Caco-2 (cell line): ENCODE measurements at regions of chr2 and their contacts with region 1.

Region 1: GRCh38 chr2:75064691-75065396 is 106.4 kb downstream of the POLE4 start:
- DNase-seq: peak; percentile 59 to 79
- H3K4me3 ChIP-seq: no peak overlapping the region
- H3K4me3 Mint-ChIP-seq: no peak overlapping the region
- H3K27ac Mint-ChIP-seq: no peak overlapping the region
- H3K4me1 ChIP-seq: no peaks in the 10 kb centered on the region
- H3K4me1 Mint-ChIP-seq: peaks cover 5% of the 10 kb centered on the region
- H3K27me3 ChIP-seq: no peaks in the 10 kb centered on the region
- H3K27me3 Mint-ChIP-seq: no peaks in the 10 kb centered on the region
- CTCF ChIP-seq: peak; percentile 91 to 92

Region 2: DNA sequence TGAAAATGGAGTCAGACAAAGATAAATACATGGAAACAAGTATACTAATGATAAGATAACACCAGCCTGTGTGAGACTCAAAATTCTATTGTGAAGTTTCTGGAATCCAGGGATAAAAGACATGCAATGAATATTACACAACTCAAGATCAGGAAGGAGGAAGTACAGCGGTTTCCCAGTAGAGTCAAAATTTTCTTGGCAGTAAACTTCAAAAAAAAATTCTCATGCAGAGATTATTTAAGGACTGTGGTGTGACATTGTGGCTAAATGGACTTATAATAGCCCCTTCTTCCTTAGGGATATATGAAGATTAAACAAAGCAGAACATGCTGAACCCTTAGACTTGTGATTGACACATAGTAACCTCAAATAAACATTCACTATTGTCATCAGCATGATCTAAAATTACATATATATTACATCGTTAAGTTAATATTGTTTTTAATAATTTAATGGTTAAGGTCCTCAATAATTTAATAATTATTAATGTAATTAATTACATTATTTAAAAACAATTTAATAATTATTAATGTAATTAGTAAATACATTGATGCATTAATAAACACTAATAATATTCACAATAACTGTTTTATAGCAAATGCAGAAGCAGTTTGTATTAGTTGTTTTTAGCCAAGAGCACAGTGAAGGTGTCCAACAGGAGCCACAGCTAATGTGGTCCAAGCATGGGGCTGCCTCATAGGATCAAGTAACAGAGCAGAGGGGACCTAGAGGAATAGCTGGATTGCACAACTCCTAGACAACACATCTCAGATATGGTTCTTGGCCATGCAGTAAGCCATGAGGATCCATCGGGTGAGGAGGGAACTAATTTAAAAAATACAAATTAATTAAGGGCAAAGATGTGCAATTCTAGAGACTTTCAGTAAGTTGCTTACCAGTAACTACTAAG is 29.1 kb before region 1 on chr2:
- CTCF ChIA-PET with region 1: no interaction called
- POLR2A ChIA-PET with region 1: no interaction called
- intact Hi-C with region 1: no loop called
- DNase-seq: peak in 1 of 2 experiments; percentile 11
- H3K4me3 ChIP-seq: no peak overlapping the region
- H3K4me3 Mint-ChIP-seq: no peak overlapping the region
- H3K27ac Mint-ChIP-seq: no peak overlapping the region
- H3K4me1 ChIP-seq: peaks cover 9% of the 10 kb centered on the region
- H3K4me1 Mint-ChIP-seq: no peaks in the 10 kb centered on the region
- H3K27me3 ChIP-seq: no peaks in the 10 kb centered on the region
- H3K27me3 Mint-ChIP-seq: no peaks in the 10 kb centered on the region
- CTCF ChIP-seq: no peak

Region 3: DNA sequence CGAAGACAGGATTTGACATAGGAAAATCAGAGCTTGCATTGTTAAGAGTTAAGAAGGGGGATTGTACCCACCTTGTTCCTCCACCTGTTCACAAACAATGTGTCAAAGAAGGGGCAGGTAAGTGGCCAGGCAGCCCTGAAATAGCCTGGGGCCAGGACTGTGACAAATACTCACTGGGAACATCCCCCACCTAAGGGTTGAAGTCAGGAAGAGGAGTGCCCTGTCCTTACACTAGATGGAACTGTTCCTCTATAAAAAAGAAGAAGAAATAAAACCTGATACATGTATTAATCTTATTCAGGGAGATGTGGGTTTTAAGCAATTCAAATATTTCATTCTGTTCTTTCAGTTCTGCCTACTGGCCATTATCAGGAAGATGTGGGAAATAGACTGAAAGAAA is 92.6 kb after region 1 on chr2:
- CTCF ChIA-PET with region 1: interaction called, 5 read pairs
- POLR2A ChIA-PET with region 1: no interaction called
- intact Hi-C with region 1: loop called (anchors 2 kb)
- DNase-seq: no peak
- H3K4me3 ChIP-seq: no peak overlapping the region
- H3K4me3 Mint-ChIP-seq: no peak overlapping the region
- H3K27ac Mint-ChIP-seq: no peak overlapping the region
- H3K4me1 ChIP-seq: peaks cover 20% of the 10 kb centered on the region
- H3K4me1 Mint-ChIP-seq: peaks cover 8% of the 10 kb centered on the region
- H3K27me3 ChIP-seq: no peaks in the 10 kb centered on the region
- H3K27me3 Mint-ChIP-seq: peaks cover 6% of the 10 kb centered on the region
- CTCF ChIP-seq: peak in 1 of 2 experiments; percentile 5

Region 4: GRCh38 chr2:75199428-75200011 is 134.7 kb after region 1 on chr2 and contains the start of gene TACR1:
- CTCF ChIA-PET with region 1: no interaction called
- POLR2A ChIA-PET with region 1: no interaction called
- intact Hi-C with region 1: loop called (anchors 1 kb)
- DNase-seq: peak; percentile 76 to 78
- H3K4me3 ChIP-seq: peak within 1 kb of the TSS; percentile 21
- H3K4me3 Mint-ChIP-seq: peak within 1 kb of the TSS; percentile 75
- H3K27ac Mint-ChIP-seq: no peak within 1 kb of the TSS
- H3K4me1 ChIP-seq: peaks cover 15% of the 10 kb centered on the region; the same call in 1 of the 2 replicates
- H3K4me1 Mint-ChIP-seq: peaks cover 6% of the 10 kb centered on the region
- H3K27me3 ChIP-seq: peaks cover 9% of the 10 kb centered on the region
- H3K27me3 Mint-ChIP-seq: peaks cover 18% of the 10 kb centered on the region
- CTCF ChIP-seq: peak; percentile 49 to 69
- total RNA-seq, gene TACR1: 0.07 TPM in 2 replicates

Region 5: DNA sequence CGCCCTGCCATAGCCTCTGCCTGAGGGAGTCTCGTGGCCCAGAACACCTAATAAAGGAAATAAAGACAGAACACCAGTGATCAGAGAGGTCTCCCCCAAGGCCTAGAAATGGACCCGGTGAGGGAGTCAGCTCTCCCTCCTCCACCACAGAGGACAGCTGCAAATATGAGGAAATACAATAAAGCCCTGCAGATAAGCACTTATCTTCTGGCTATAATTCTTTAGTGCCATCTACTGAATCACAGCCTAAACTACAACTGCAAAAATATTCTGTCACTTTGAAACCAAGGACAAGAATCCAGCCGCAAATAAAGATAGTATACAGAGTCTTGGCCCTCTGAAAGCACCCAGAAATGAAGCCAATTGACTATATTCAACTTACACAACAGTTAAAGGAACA is 176.9 kb after region 1 on chr2:
- CTCF ChIA-PET with region 1: interaction called, 3 read pairs
- POLR2A ChIA-PET with region 1: no interaction called
- intact Hi-C with region 1: loop called (anchors 2 kb)
- DNase-seq: no peak
- H3K4me3 ChIP-seq: no peak overlapping the region
- H3K4me3 Mint-ChIP-seq: no peak overlapping the region
- H3K27ac Mint-ChIP-seq: no peak overlapping the region
- H3K4me1 ChIP-seq: no peaks in the 10 kb centered on the region
- H3K4me1 Mint-ChIP-seq: no peaks in the 10 kb centered on the region
- H3K27me3 ChIP-seq: no peaks in the 10 kb centered on the region
- H3K27me3 Mint-ChIP-seq: peaks cover 2% of the 10 kb centered on the region
- CTCF ChIP-seq: peak in 1 of 2 experiments; percentile 5

Region 6: GRCh38 chr2:75627895-75628504 is 563.2 kb after region 1 on chr2:
- CTCF ChIA-PET with region 1: no interaction called
- POLR2A ChIA-PET with region 1: no interaction called
- intact Hi-C with region 1: loop called (anchors 2 kb)
- DNase-seq: peak; percentile 77 to 86
- H3K4me3 ChIP-seq: no peak overlapping the region
- H3K4me3 Mint-ChIP-seq: no peak overlapping the region
- H3K27ac Mint-ChIP-seq: no peak overlapping the region
- H3K4me1 ChIP-seq: no peaks in the 10 kb centered on the region
- H3K4me1 Mint-ChIP-seq: peaks cover 9% of the 10 kb centered on the region
- H3K27me3 ChIP-seq: no peaks in the 10 kb centered on the region
- H3K27me3 Mint-ChIP-seq: peaks cover 10% of the 10 kb centered on the region
- CTCF ChIP-seq: peak; percentile 91 to 97